ENCODE measurements at regions of chr12 and their contacts with region 1.

Region 1: DNA sequence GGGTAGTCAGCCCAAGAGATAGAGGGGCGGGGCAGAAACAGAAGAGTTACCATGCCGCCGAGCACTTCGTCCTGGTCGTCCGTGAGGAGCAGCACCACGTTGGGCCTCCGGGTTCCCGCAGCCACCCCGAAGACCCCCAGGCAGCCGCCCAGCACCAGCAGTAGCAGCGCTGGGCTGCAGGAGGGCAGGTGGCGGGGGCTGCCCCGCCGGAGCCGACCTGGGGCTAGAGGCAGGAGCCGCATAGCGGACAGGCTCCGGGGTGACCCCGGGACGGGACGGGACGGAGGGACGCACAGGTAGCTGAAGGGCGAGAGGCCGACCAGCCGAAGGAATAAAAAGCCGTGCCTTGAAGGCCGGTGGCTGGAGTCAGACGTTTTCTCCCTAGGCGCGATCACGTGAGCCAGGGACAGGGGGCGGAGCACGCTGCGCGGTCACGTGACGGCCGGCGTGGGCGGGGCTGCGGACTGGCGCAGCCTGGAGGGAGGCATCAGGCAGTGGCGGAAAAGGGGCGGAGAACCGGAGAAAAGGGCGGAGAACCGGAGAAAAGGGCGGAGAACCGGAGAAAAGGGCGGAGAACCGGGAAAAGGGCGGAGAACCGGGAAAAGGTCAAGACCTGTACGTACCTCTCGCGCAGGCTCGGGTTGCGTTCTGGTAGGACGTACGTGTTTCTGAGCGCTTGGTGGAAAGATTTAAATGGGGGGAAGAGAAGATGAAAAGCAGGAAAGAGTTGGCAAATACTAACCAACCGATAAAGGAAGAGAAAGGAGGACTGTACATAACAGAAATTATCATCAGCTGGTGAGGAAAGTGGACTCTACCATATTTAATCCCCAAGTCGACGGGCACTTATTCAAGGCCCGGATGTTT is at the start of gene GNS:
- DNase-seq: peak; percentile 98
- ATAC-seq: peak; percentile 93
- H3K4me3 Mint-ChIP-seq: peak within 1 kb of the TSS; percentile 92
- H3K27ac Mint-ChIP-seq: peak within 1 kb of the TSS; percentile 83
- H3K4me1 Mint-ChIP-seq: peaks cover 41% of the 10 kb centered on the region
- H3K27me3 Mint-ChIP-seq: no peaks in the 10 kb centered on the region
- CTCF ChIP-seq: no peak
- total RNA-seq, gene GNS: 16.3 and 17.7 TPM in 2 replicates

Region 2: DNA sequence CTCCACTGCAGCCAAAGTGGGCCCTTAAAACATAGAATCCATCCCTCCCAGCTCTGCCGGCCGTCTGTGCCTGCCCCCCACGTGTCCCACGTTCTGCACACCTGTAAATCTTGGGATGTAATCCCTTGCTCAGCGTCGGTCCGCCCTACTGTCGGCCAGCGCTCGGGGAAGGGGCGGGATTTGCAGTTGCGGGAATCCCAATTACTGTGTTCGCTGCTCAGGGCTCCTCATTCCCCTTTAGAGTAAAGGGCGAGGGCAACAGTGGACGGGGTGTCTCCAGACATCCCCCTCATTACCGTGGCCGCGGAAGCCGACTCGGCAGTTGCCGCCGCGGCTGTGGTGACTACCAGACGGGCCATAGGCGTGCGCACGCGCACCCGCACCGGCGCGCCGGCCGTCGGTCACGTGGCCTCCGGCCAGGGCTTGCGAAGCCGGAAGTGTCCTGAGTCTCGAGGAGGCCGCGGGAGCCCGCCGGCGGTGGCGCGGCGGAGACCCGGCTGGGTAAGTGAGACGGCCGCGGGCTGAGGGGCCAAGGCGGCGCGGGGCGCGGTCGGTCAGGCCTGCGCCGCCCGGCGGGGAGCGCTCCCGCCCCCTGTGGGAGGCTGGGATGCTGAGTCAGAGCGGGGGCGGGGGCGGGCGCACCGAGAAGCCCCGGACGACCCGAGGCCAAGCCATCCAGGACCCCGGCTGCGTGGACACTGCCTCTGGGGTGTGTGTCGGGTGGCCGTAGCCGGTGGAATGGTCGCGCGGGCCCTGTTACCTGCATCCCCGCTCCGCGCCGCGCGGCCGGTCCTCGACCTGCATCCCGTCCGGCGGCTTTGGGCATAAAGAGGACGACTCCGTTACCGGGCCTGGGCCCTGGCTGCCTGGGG is 307.3 kb before region 1 on chr12 and contains the start of gene TBK1:
- CTCF ChIA-PET with region 1: no interaction called
- POLR2A ChIA-PET with region 1: no interaction called
- intact Hi-C with region 1: loop called (anchors 2 kb)
- DNase-seq: peak; percentile 82
- ATAC-seq: peak; percentile 82
- H3K4me3 Mint-ChIP-seq: peak within 1 kb of the TSS; percentile 97
- H3K27ac Mint-ChIP-seq: peak within 1 kb of the TSS; percentile 88
- H3K4me1 Mint-ChIP-seq: peaks cover 44% of the 10 kb centered on the region
- H3K27me3 Mint-ChIP-seq: no peaks in the 10 kb centered on the region
- CTCF ChIP-seq: no peak
- total RNA-seq, gene TBK1: 32.6 and 37.4 TPM in 2 replicates

Region 3: DNA sequence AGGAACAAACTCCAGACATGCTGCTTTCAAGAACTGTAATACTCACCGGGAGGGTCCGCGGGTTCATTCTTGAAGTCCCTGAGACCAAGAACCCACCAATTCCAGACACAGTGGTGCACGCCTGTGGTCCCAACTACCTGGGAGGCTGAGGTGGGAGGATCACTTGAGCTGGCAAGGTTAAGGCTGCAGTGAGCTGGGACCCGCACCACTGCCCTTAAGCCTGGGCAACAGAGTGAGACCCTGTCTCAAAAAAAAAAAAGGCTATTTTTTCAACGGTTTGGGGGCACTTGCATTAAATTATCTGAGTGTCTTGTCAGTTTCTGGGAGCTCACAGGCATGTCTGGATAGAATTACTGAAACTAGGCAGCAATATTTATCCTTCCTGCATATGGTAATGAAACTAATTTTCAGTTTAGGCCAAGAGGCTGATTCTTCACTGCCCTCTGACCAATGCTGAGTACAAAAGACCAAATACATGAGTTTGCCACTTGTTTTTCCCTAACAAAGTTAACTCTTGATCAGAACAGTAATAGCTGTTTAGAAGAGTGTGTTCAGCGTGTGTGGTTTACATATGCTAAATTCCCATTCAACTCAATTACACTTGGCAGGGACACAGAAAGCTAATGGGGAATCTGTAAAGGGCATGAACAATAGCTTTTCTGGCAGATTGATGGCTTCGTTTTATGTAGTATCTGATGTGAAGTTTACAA is 214.7 kb before region 1 on chr12:
- CTCF ChIA-PET with region 1: no interaction called
- POLR2A ChIA-PET with region 1: no interaction called
- intact Hi-C with region 1: loop called (anchors 1 kb)
- DNase-seq: no peak
- ATAC-seq: no peak
- H3K4me3 Mint-ChIP-seq: no peak overlapping the region
- H3K27ac Mint-ChIP-seq: no peak overlapping the region
- H3K4me1 Mint-ChIP-seq: no peaks in the 10 kb centered on the region
- H3K27me3 Mint-ChIP-seq: peaks cover 5% of the 10 kb centered on the region
- CTCF ChIP-seq: no peak

Region 4: DNA sequence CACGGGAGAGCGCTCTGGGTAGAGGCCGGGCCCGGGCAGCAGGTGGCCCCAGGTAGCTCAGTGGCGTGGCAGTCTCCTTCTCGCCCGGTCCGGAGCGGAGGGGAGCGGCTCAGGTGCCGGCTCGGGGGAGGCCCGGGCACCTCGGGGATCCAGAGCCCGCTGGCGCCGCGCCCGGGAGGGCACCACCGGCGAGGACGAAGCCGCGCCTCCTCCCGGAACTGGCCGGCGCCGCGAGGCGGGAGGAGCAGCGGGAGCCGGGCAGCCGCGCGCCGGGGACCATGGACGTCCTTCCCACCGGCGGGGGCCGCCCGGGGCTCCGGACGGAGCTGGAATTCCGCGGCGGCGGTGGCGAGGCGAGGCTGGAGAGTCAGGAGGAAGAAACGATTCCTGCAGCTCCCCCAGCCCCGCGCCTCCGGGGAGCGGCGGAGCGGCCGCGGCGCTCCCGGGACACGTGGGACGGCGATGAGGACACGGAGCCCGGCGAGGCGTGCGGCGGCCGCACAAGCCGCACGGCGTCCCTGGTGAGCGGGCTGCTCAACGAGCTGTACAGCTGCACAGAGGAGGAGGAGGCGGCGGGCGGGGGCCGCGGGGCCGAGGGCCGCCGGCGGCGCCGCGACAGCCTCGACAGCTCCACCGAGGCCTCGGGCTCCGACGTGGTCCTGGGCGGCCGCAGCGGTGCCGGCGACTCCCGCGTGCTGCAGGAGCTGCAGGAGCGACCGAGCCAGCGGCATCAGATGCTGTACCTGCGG is 21.4 kb after region 1 on chr12:
- CTCF ChIA-PET with region 1: interaction called, 3 read pairs
- POLR2A ChIA-PET with region 1: interaction called, 4 read pairs
- intact Hi-C with region 1: loop called (anchors 1 kb)
- DNase-seq: peak; percentile 41
- ATAC-seq: peak; percentile 78
- H3K4me3 Mint-ChIP-seq: peak overlapping the region; percentile 89
- H3K27ac Mint-ChIP-seq: no peak overlapping the region
- H3K4me1 Mint-ChIP-seq: peaks cover 23% of the 10 kb centered on the region
- H3K27me3 Mint-ChIP-seq: peaks cover 50% of the 10 kb centered on the region
- CTCF ChIP-seq: no peak

Measured in activated B cell treated with CpG ODN at 0.5 μM for 24 hours (primary cell).